Activated CD4-positive, alpha-beta memory T cell treated with anti-CD3 and anti-CD28 coated beads for 36 hours (primary cell): ENCODE measurements at regions of chr19 and their contacts with region 1.

Region 1: DNA sequence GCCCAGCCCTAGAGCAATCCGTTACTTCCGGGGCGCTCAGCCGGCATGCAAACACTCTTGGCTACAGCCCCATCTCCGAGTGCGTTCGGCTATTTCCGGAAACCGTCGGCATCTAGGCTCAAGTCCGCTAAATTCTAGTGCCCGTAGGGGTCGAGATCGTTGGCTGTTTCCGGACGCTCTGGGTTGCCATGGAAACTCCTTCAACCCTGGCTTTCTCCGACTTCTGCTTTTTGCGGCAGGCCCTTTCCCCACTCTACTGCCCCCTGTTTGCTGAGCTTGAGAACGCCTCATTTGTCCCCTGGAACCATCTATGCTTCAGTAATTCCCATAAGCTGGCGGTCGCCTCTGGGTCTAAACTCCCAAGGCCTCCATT is 533 bp upstream of the PIK3R2 start:
- DNase-seq: peak; percentile 99
- H3K4me3 Mint-ChIP-seq: peak overlapping the region; percentile 66
- H3K27ac Mint-ChIP-seq: peak overlapping the region; percentile 97
- H3K4me1 Mint-ChIP-seq: peaks cover 22% of the 10 kb centered on the region
- H3K27me3 Mint-ChIP-seq: no peaks in the 10 kb centered on the region

Region 2: GRCh38 chr19:17932485-17933338 is 219.7 kb before region 1 on chr19 and contains the start of gene CCDC124:
- CTCF ChIA-PET with region 1: no interaction called
- POLR2A ChIA-PET with region 1: no interaction called
- intact Hi-C with region 1: loop called (anchors 5 kb)
- DNase-seq: peak; percentile 96
- H3K4me3 Mint-ChIP-seq: peak within 1 kb of the TSS; percentile 91
- H3K27ac Mint-ChIP-seq: peak within 1 kb of the TSS; percentile 92
- H3K4me1 Mint-ChIP-seq: peaks cover 30% of the 10 kb centered on the region
- H3K27me3 Mint-ChIP-seq: no peaks in the 10 kb centered on the region
- total RNA-seq, gene CCDC124: 101 to 105 TPM

Region 3: DNA sequence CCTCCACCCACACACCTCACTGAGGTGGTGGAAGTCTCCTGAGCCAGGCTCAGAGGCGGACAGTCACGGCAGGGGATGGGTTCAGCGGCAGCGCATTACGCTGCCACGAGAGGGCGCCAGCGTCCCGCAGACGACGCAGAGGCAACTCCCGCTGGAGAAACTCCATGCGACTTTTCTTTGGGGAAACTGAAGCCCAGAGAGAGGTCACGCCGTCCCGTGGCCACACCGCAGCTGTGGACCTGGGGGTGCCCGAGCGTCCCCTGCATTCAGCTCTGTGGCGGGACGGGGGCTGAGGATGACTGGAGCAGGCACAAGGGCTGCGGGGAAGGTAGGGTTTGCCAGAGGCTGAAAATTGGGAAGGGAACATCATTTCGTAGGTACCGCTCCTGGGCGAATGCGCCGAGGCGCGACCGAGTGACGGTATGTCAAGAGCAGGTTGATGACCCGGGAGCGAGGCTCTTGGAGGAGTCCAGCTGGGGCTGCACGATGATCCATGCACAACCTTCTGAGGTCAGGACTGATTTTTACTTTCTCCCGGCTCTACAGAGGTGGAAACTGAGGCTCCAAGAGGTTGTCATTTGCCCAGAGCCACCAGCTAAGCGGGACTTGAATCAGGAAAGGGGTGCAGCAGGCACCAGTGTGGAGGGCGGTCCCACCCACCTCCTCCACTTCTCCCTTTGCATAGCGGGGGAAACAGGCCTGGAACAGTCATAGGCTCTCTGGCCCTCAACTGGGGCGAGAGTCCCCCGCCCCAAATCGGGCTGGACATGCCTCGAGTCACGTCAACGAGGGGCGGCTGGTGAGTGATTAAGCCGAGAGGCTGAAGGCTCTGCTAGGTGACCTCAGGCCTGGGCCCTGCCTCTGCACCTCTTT is 145.2 kb before region 1 on chr19:
- CTCF ChIA-PET with region 1: interaction called, 4 read pairs
- POLR2A ChIA-PET with region 1: no interaction called
- intact Hi-C with region 1: loop called (anchors 2 kb)
- DNase-seq: peak; percentile 88
- H3K4me3 Mint-ChIP-seq: peak overlapping the region; percentile 83
- H3K27ac Mint-ChIP-seq: peak overlapping the region; percentile 82
- H3K4me1 Mint-ChIP-seq: peaks cover 35% of the 10 kb centered on the region
- H3K27me3 Mint-ChIP-seq: no peaks in the 10 kb centered on the region

Region 4: DNA sequence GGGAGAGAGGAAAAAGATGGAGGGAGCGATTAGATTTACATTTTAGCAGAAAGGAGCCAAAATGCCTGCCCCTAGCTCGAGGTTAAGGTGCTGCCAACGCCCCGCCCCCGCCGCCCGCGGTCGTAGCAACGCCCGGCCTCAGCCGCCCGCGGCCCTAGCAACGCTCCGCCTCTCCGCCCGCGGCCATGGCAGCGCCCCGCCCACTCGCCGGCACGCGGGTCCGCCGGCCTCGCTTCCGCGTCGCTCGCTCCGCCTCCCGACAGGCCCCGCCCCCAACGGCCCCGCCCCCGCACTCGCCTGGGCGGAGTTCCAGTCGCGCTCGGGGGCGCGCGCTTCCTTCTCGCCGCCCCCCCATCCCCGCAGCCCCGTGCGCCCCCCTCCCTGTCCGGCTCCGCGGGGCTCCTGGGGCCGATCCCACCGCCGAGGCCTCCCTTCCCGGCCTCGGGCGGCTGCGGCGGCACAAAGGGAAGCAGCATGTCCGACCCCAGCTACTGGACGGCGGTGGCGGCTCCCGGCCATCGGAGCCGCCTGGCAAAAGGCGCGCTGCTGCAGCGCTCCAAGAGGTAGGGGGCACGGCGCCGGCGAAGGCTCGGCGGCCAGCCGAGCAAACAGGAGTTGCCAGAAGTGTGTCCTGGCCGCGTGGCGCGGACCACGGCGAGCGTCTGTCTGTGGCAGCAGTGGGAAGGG is 34.6 kb before region 1 on chr19:
- CTCF ChIA-PET with region 1: interaction called, 22 read pairs
- POLR2A ChIA-PET with region 1: interaction called, 15 read pairs
- intact Hi-C with region 1: loop called (anchors 1 kb)
- DNase-seq: peak; percentile 95
- H3K4me3 Mint-ChIP-seq: peak overlapping the region; percentile 81
- H3K27ac Mint-ChIP-seq: peak overlapping the region; percentile 87
- H3K4me1 Mint-ChIP-seq: peaks cover 36% of the 10 kb centered on the region
- H3K27me3 Mint-ChIP-seq: no peaks in the 10 kb centered on the region

Region 5: GRCh38 chr19:18224525-18225354 is 72.3 kb after region 1 on chr19:
- CTCF ChIA-PET with region 1: no interaction called
- POLR2A ChIA-PET with region 1: no interaction called
- intact Hi-C with region 1: loop called (anchors 2 kb)
- DNase-seq: peak; percentile 96
- H3K4me3 Mint-ChIP-seq: peak overlapping the region; percentile 71
- H3K27ac Mint-ChIP-seq: no peak overlapping the region
- H3K4me1 Mint-ChIP-seq: peaks cover 21% of the 10 kb centered on the region
- H3K27me3 Mint-ChIP-seq: peaks cover 57% of the 10 kb centered on the region